Right cardiac atrium (tissue), 5 donors: ENCODE measurements at regions of chr9 and their contacts with region 1.

Region 1: GRCh38 chr9:34591248-34591916 is 1.9 kb upstream of the CNTFR start:
- DNase-seq: peak; percentile 88 to 96 (median 96)
- ATAC-seq: peak; percentile 73 to 85
- H3K4me3 ChIP-seq: peak overlapping the region; percentile 18
- H3K27ac ChIP-seq: peak overlapping the region; percentile 21
- H3K4me1 ChIP-seq: peaks cover 7% of the 10 kb centered on the region
- H3K27me3 ChIP-seq: no peaks in the 10 kb centered on the region

Region 2: GRCh38 chr9:34171753-34172535 is 419.4 kb before region 1 on chr9:
- intact Hi-C with region 1: no loop called
- DNase-seq: peak in 1 of 3 donors; percentile 20
- ATAC-seq: peak in 1 of 2 donors; percentile 48
- H3K4me3 ChIP-seq: no peak overlapping the region
- H3K27ac ChIP-seq: no peak overlapping the region
- H3K4me1 ChIP-seq: no peaks in the 10 kb centered on the region
- H3K27me3 ChIP-seq: no peaks in the 10 kb centered on the region

Region 3: DNA sequence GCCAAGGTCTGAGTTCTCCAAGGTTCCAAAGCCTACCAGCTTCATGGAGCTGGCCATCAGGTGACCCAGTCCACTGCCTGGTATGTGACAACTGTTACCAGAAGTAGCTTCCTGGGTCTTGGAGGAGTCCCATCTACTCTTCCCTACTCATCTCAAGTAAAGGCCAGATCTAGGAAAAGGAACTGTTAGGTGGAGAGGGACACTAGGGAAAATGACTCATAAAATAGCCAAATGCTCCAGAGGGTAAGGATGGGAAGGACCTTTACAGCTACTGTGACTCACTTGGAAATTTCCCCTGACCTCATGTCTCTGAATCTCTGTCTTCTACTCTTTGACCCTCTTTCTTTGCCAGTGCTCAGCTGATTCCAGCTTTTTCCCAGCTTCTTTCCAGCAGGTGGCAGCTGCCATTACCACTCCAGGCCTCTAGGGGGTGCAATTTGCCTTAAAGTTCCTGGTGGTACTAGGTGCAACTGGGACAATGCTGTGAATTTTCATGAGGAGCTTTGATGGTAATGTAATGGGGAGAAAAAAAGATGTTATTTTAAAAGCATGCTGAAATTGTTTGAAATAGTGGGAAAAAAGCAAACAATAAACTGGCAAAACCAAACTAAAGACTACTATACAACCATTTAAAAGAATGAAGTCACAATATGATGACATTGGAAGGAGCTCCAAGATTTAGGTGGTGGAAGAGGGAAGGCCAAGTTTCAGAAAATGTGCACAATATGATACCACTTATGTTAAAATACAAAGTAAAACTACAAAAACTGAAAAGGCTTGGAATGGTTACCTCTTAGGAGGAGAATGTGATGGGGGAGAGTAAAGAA is 187.6 kb before region 1 on chr9:
- intact Hi-C with region 1: loop called in 2 of 4 experiments (anchors 5 to 10 kb)
- DNase-seq: peak; percentile 56 to 85 (median 82)
- ATAC-seq: peak in 1 of 2 donors; percentile 60
- H3K4me3 ChIP-seq: no peak overlapping the region
- H3K27ac ChIP-seq: no peak overlapping the region
- H3K4me1 ChIP-seq: no peaks in the 10 kb centered on the region
- H3K27me3 ChIP-seq: no peaks in the 10 kb centered on the region

Region 4: GRCh38 chr9:34437006-34437925 is 154.1 kb before region 1 on chr9:
- intact Hi-C with region 1: loop called in 2 of 4 experiments (anchors 10 kb)
- DNase-seq: peak in 2 of 3 donors; percentile 20 to 66
- ATAC-seq: peak; percentile 76 to 78
- H3K4me3 ChIP-seq: no peak overlapping the region
- H3K27ac ChIP-seq: no peak overlapping the region
- H3K4me1 ChIP-seq: peaks cover 6% of the 10 kb centered on the region
- H3K27me3 ChIP-seq: no peaks in the 10 kb centered on the region

Region 5: GRCh38 chr9:34446468-34446891 is 144.9 kb before region 1 on chr9:
- intact Hi-C with region 1: loop called in 1 of 4 experiments (anchors 10 kb)
- DNase-seq: no peak
- ATAC-seq: peak in 1 of 2 donors; percentile 57
- H3K4me3 ChIP-seq: no peak overlapping the region
- H3K27ac ChIP-seq: no peak overlapping the region
- H3K4me1 ChIP-seq: peaks cover 18% of the 10 kb centered on the region
- H3K27me3 ChIP-seq: no peaks in the 10 kb centered on the region

Region 6: DNA sequence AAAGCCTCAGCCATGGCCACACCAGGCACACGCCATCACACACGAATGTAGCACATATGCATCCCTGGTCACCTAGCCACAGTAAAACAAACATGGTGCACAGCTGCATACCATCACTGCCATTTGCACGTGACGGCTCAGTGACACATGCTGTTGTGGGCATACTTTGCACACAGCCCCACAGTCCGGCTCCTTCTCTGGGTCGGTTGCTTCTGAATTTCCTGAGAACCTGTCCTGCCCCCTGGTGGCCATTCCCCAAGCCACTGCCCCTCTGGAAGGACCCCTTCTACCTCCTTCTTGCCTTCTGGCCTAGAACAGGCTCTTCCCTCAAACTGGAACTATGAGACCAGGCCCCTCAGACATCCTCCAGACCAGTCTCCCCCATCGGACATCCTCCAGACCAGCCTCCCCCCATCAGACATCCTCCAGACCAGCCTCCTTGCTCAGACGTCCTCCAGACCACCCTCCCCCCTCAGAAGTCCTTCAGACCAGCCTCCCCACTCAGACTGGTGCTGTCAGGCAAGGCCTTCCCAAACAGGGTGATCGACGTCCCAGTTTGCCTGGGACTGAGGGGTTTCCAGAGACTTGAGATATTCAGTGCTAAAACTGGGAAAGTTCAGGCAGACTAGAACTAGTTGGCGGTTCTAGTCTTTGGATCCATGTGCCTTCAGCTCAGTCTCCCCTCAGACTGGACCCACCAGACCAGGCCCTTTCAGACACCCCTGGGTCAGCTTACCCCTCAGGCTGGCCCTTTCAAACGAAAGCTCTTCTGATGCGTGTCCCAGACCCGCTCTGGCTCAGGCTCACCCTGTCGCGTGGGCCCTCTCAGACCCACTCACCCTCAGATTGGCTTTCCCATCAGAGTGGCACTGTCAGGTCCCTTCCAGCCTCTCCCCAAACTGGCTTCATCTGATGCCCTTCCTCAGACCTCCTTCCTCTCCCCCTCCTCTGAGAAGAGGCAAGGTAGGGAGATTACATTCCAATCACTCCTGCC is 44.3 kb before region 1 on chr9:
- intact Hi-C with region 1: loop called (anchors 1 to 2 kb)
- DNase-seq: peak; percentile 75 to 88 (median 82)
- ATAC-seq: peak; percentile 59 to 73
- H3K4me3 ChIP-seq: no peak overlapping the region
- H3K27ac ChIP-seq: no peak overlapping the region
- H3K4me1 ChIP-seq: no peaks in the 10 kb centered on the region
- H3K27me3 ChIP-seq: no peaks in the 10 kb centered on the region